ENCODE measurements at regions of chr19 and their contacts with region 1.

Region 1: DNA sequence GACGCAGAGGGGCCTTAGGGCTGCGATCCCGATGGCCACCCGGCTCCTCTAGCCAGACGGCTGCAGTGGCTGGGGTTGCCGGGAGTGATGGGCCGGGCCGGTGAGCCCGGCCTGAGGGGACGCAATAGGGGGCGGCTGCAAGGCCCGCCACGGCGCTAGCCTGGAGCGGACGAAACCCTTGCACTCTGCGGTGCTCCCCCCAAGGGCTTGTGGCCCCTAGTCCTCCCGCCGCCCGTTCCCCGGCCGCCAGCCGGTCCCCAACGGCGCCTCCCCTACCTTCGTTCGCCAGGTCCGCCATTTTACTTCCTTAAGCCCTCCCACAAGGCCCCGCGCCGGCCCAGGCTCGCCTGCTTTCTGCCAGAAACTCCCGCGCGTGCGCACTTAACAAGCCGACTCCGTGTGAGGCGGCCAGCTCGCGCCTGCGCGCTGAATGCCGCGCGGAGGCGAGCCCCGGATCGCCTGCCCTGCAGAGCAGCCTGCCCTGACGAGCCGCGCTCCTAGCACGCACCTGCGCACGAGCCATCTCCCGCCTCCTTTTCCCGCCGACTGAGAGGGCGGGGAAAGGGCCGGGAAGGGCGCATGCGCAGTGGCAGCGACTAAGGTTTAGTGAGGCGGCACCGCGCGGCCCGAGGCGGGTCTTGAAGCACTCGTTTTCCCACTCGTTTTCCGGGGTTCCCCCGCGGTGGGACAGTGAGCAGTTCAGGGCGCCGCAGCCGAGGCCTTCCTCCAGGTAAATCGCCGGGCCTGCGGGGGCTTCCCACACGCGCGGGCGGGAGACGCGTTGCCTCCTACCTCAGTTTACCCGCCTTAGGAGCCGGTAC is at the start of gene RANBP3:
- DNase-seq: peak; percentile 94 to 99 (median 99)
- ATAC-seq: peak; percentile 94
- H3K4me3 ChIP-seq: peak within 1 kb of the TSS; percentile 78
- H3K4me3 Mint-ChIP-seq: peak within 1 kb of the TSS; percentile 92 to 99 (median 96)
- H3K27ac ChIP-seq: peak within 1 kb of the TSS; percentile 94
- H3K27ac Mint-ChIP-seq: peak within 1 kb of the TSS; percentile 91 to 97 (median 95)
- H3K4me1 ChIP-seq: peaks cover 31 to 45% of the 10 kb centered on the region in 2 donors
- H3K4me1 Mint-ChIP-seq: peaks cover 42 to 65% (median 55%) of the 10 kb centered on the region in 7 donors
- H3K27me3 ChIP-seq: no peaks in the 10 kb centered on the region
- H3K27me3 Mint-ChIP-seq: peaks cover 0 to 2% (median 0%) of the 10 kb centered on the region in 5 donors
- total RNA-seq, gene RANBP3: 88.3 to 104 (median 94.0) TPM

Region 2: GRCh38 chr19:5680437-5681368 is 297.3 kb before region 1 on chr19 and contains the starts of genes HSD11B1L and MICOS13:
- CTCF ChIA-PET with region 1: no interaction called
- POLR2A ChIA-PET with region 1: no interaction called
- intact Hi-C with region 1: loop called in 1 of 2 experiments (anchors 1 kb)
- DNase-seq: peak; percentile 98 to 99 (median 99)
- ATAC-seq: peak; percentile 96
- H3K4me3 ChIP-seq: peak within 1 kb of the TSS; percentile 100
- H3K4me3 Mint-ChIP-seq: peak within 1 kb of the TSS; percentile 85 to 97 (median 94)
- H3K27ac ChIP-seq: peak within 1 kb of the TSS; percentile 98
- H3K27ac Mint-ChIP-seq: peak within 1 kb of the TSS; percentile 94 to 100 (median 97)
- H3K4me1 ChIP-seq: peaks cover 8 to 18% of the 10 kb centered on the region in 2 donors
- H3K4me1 Mint-ChIP-seq: peaks cover 20 to 33% (median 25%) of the 10 kb centered on the region in 7 donors
- H3K27me3 ChIP-seq: no peaks in the 10 kb centered on the region
- H3K27me3 Mint-ChIP-seq: peaks cover 0 to 18% (median 0%) of the 10 kb centered on the region in 5 donors
- total RNA-seq, gene HSD11B1L: 2.8 to 5.2 (median 3.6) TPM
- total RNA-seq, gene MICOS13: 26.1 to 49.3 (median 38.4) TPM

Region 3: GRCh38 chr19:5690125-5690954 is 287.7 kb before region 1 on chr19 and contains the start of gene RPL36:
- CTCF ChIA-PET with region 1: no interaction called
- POLR2A ChIA-PET with region 1: no interaction called
- intact Hi-C with region 1: loop called in 1 of 2 experiments (anchors 1 kb)
- DNase-seq: peak; percentile 95 to 100 (median 99)
- ATAC-seq: peak; percentile 77
- H3K4me3 ChIP-seq: peak within 1 kb of the TSS; percentile 90
- H3K4me3 Mint-ChIP-seq: peak within 1 kb of the TSS; percentile 90 to 98 (median 94)
- H3K27ac ChIP-seq: peak within 1 kb of the TSS; percentile 85
- H3K27ac Mint-ChIP-seq: peak within 1 kb of the TSS; percentile 89 to 97 (median 93)
- H3K4me1 ChIP-seq: peaks cover 12 to 21% of the 10 kb centered on the region in 2 donors
- H3K4me1 Mint-ChIP-seq: peaks cover 5 to 39% (median 33%) of the 10 kb centered on the region in 7 donors
- H3K27me3 ChIP-seq: no peaks in the 10 kb centered on the region
- H3K27me3 Mint-ChIP-seq: no peaks in the 10 kb centered on the region
- total RNA-seq, gene RPL36: 865 to 1,786 (median 1,037) TPM

Region 4: GRCh38 chr19:5790573-5791520 is 187.1 kb before region 1 on chr19 and contains the start of gene DUS3L:
- CTCF ChIA-PET with region 1: no interaction called
- POLR2A ChIA-PET with region 1: interaction called, 4 read pairs
- intact Hi-C with region 1: loop called (anchors 1 to 5 kb)
- DNase-seq: peak; percentile 90 to 97 (median 94)
- ATAC-seq: peak; percentile 97
- H3K4me3 ChIP-seq: peak within 1 kb of the TSS; percentile 95
- H3K4me3 Mint-ChIP-seq: peak within 1 kb of the TSS; percentile 94 to 100 (median 100)
- H3K27ac ChIP-seq: peak within 1 kb of the TSS; percentile 91
- H3K27ac Mint-ChIP-seq: peak within 1 kb of the TSS; percentile 99 to 100 (median 100)
- H3K4me1 ChIP-seq: peaks cover 8 to 12% of the 10 kb centered on the region in 2 donors
- H3K4me1 Mint-ChIP-seq: peaks cover 6 to 22% (median 15%) of the 10 kb centered on the region in 7 donors
- H3K27me3 ChIP-seq: no peaks in the 10 kb centered on the region
- H3K27me3 Mint-ChIP-seq: no peaks in the 10 kb centered on the region
- total RNA-seq, gene DUS3L: 53.2 to 179 (median 82.7) TPM

Region 5: GRCh38 chr19:5827891-5828660 is 149.9 kb before region 1 on chr19:
- CTCF ChIA-PET with region 1: interaction called, 3 read pairs
- POLR2A ChIA-PET with region 1: no interaction called
- intact Hi-C with region 1: loop called in 1 of 2 experiments (anchors 1 kb)
- DNase-seq: peak; percentile 91 to 98 (median 94)
- ATAC-seq: peak; percentile 90
- H3K4me3 ChIP-seq: peak overlapping the region; percentile 76
- H3K4me3 Mint-ChIP-seq: peak overlapping the region; percentile 91 to 100 (median 97)
- H3K27ac ChIP-seq: peak overlapping the region; percentile 80
- H3K27ac Mint-ChIP-seq: peak overlapping the region; percentile 94 to 100 (median 97)
- H3K4me1 ChIP-seq: peaks cover 10 to 17% of the 10 kb centered on the region in 2 donors
- H3K4me1 Mint-ChIP-seq: peaks cover 5 to 19% (median 10%) of the 10 kb centered on the region in 7 donors
- H3K27me3 ChIP-seq: no peaks in the 10 kb centered on the region
- H3K27me3 Mint-ChIP-seq: peaks cover 0 to 6% (median 0%) of the 10 kb centered on the region in 5 donors

Region 6: GRCh38 chr19:5947435-5947834 is 30.6 kb before region 1 on chr19:
- CTCF ChIA-PET with region 1: no interaction called
- POLR2A ChIA-PET with region 1: interaction called, 12 read pairs
- intact Hi-C with region 1: loop called in 1 of 2 experiments (anchors 1 kb)
- DNase-seq: no peak
- ATAC-seq: peak; percentile 68
- H3K4me3 ChIP-seq: no peak overlapping the region
- H3K4me3 Mint-ChIP-seq: peak overlapping the region in 9 of 10 donors; percentile 16 to 82 (median 60)
- H3K27ac ChIP-seq: no peak overlapping the region
- H3K27ac Mint-ChIP-seq: peak overlapping the region in 7 of 9 donors; percentile 64 to 99 (median 89)
- H3K4me1 ChIP-seq: peaks cover 28 to 59% of the 10 kb centered on the region in 2 donors
- H3K4me1 Mint-ChIP-seq: peaks cover 57 to 88% (median 77%) of the 10 kb centered on the region in 7 donors
- H3K27me3 ChIP-seq: no peaks in the 10 kb centered on the region
- H3K27me3 Mint-ChIP-seq: no peaks in the 10 kb centered on the region

Region 7: DNA sequence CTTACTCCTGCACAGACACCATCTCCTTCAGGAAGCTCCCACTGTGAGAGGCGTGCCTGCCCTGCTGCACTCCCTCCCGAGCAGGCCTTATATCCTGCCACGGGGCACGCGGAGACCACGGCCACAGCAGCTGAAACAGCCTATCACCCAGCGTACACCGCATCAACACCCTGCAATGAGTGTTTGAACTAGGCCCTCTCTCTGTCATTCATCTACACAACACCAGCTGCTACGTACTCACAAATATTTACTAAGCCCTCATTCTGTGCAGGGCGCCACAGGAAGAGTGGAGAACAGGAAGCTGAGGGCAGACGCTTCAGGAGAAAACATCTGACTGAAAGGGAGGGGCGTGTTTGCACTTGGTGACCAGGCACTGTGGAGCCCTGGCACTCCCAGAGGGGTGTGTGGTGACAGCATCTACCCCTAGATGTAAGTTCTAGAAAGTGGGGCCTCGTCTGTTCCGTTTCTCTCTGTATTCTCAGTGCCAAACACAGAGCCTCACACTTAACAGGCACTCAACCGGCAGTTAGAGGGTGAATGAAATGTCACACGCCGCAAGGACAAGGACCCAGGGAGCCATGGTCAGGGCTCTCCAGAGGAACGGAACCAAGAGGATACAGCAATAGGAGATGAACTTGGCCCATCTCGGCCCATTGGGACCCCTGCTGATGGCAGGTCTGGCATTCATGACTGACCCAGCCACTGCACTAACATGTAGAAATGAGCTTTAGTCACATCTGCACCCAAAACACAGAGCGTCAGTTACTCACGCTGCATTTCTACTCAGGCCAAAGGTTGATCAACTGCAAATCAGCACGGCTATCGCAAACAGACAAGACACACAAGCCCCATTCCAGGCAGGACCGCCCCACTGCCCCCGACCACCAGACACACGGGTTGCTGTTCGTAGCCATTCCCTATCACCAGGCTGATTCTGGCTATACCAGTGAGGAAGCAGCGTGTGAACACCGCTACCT is 15.7 kb before region 1 on chr19:
- CTCF ChIA-PET with region 1: interaction called, 41 read pairs
- POLR2A ChIA-PET with region 1: interaction called, 50 read pairs
- intact Hi-C with region 1: loop called (anchors 1 to 2 kb)
- DNase-seq: peak; percentile 42 to 92 (median 88)
- ATAC-seq: peak; percentile 96
- H3K4me3 ChIP-seq: peak overlapping the region; percentile 38
- H3K4me3 Mint-ChIP-seq: peak overlapping the region; percentile 79 to 89 (median 84)
- H3K27ac ChIP-seq: peak overlapping the region; percentile 77
- H3K27ac Mint-ChIP-seq: peak overlapping the region; percentile 95 to 100 (median 99)
- H3K4me1 ChIP-seq: peaks cover 56 to 84% of the 10 kb centered on the region in 2 donors
- H3K4me1 Mint-ChIP-seq: peaks cover 69 to 99% (median 89%) of the 10 kb centered on the region in 7 donors
- H3K27me3 ChIP-seq: no peaks in the 10 kb centered on the region
- H3K27me3 Mint-ChIP-seq: no peaks in the 10 kb centered on the region

Region 8: DNA sequence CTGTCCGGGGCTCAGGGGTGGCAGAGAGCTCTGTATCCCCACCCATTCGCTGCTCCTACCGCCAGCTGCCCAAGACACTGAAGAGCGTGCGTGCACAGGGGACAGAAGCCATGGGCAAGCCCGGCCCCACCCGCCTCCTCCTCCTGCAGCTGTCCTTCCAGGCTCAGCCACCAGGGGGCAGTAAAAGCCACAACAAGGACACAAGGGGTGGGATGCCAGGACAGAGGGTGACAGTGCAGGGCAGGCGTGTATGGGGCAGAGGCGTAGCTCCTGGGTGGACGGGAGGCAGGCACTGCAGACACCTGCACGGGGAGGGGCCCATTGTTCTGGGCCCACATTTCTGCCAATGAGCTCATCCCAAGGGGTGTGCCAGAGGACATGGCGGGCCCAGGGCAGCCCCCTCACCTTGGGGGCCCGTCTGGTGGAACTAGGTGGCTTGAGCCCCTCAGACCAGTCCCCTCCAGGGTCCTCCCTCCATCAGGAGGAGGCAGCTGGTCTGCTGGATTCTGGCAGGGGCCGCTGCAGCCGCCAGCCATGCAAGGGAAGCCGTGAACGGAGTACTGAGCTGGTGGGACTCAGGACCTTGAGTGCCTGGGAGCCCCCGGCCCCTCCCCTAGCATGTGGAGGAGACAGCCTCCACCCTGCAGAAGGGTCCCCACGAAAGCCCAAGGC is 240.6 kb after region 1 on chr19:
- CTCF ChIA-PET with region 1: no interaction called
- POLR2A ChIA-PET with region 1: no interaction called
- intact Hi-C with region 1: no loop called
- DNase-seq: peak; percentile 63 to 85 (median 76)
- ATAC-seq: peak; percentile 86
- H3K4me3 ChIP-seq: no peak overlapping the region
- H3K4me3 Mint-ChIP-seq: no peak overlapping the region
- H3K27ac ChIP-seq: no peak overlapping the region
- H3K27ac Mint-ChIP-seq: peak overlapping the region in 3 of 9 donors; percentile 10 to 78 (median 35)
- H3K4me1 ChIP-seq: no peaks in the 10 kb centered on the region
- H3K4me1 Mint-ChIP-seq: peaks cover 0 to 4% (median 0%) of the 10 kb centered on the region in 7 donors
- H3K27me3 ChIP-seq: no peaks in the 10 kb centered on the region
- H3K27me3 Mint-ChIP-seq: no peaks in the 10 kb centered on the region

Measured in naive thymus-derived CD4-positive, alpha-beta T cell (primary cell).